Right cardiac atrium (tissue), 5 donors: ENCODE measurements at regions of chr11 and their contacts with region 1.

Region 1: GRCh38 chr11:131674051-131674755 is 303.8 kb downstream of the NTM start:
- DNase-seq: peak; percentile 59 to 87 (median 86)
- ATAC-seq: peak; percentile 86 to 88
- H3K4me3 ChIP-seq: no peak overlapping the region
- H3K27ac ChIP-seq: no peak overlapping the region
- H3K4me1 ChIP-seq: no peaks in the 10 kb centered on the region
- H3K27me3 ChIP-seq: no peaks in the 10 kb centered on the region

Region 2: GRCh38 chr11:130924770-130925169 is 749.4 kb before region 1 on chr11:
- intact Hi-C with region 1: loop called in 3 of 4 experiments (anchors 5 to 10 kb)
- DNase-seq: no peak
- ATAC-seq: no peak
- H3K4me3 ChIP-seq: no peak overlapping the region
- H3K27ac ChIP-seq: no peak overlapping the region
- H3K4me1 ChIP-seq: no peaks in the 10 kb centered on the region
- H3K27me3 ChIP-seq: no peaks in the 10 kb centered on the region

Region 3: DNA sequence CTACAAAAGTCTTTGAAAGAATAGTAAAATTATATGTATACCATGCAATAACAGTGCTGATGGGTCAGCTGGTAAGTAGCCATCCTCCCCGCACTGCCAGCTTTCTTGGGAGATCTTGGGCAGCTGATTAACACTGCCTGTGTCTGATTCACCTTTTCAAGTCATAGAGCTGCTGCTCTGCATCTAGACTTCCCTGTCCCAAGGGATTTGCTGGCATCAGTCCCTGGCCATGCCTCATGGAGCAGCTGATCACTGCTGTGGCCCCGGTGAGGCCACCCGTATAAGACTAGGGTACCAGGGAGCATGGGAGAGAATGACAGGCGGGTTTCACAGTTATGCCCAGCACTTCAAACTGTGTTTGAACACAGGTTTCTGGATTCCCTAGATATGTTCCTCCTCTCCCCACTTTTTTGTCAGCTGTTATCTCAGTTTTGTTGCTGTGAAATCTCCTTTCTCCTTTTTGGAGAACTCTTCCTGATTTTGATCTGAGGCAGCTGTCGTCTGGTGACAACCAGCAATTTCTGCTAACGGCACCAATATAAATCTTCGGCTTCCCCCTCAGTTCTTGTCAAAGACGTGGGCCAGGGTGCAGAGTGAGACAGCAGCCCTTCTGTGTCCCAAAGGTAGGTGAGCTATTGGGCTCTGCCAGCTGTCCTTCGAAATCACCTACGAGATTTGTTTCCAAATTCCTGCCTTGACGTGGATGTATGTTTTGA is 135.2 kb after region 1 on chr11:
- intact Hi-C with region 1: no loop called
- DNase-seq: no peak
- ATAC-seq: no peak
- H3K4me3 ChIP-seq: no peak overlapping the region
- H3K27ac ChIP-seq: no peak overlapping the region
- H3K4me1 ChIP-seq: no peaks in the 10 kb centered on the region
- H3K27me3 ChIP-seq: peaks cover 4% of the 10 kb centered on the region

Region 4: GRCh38 chr11:131827430-131827829 is 153.2 kb after region 1 on chr11:
- intact Hi-C with region 1: no loop called
- DNase-seq: no peak
- ATAC-seq: no peak
- H3K4me3 ChIP-seq: no peak overlapping the region
- H3K27ac ChIP-seq: no peak overlapping the region
- H3K4me1 ChIP-seq: no peaks in the 10 kb centered on the region
- H3K27me3 ChIP-seq: no peaks in the 10 kb centered on the region

Region 5: GRCh38 chr11:131851964-131852755 is 178.0 kb after region 1 on chr11:
- intact Hi-C with region 1: no loop called
- DNase-seq: no peak
- ATAC-seq: no peak
- H3K4me3 ChIP-seq: no peak overlapping the region
- H3K27ac ChIP-seq: no peak overlapping the region
- H3K4me1 ChIP-seq: no peaks in the 10 kb centered on the region
- H3K27me3 ChIP-seq: no peaks in the 10 kb centered on the region